ENCODE measurements at regions of chr6 and their contacts with region 1.

Region 1: DNA sequence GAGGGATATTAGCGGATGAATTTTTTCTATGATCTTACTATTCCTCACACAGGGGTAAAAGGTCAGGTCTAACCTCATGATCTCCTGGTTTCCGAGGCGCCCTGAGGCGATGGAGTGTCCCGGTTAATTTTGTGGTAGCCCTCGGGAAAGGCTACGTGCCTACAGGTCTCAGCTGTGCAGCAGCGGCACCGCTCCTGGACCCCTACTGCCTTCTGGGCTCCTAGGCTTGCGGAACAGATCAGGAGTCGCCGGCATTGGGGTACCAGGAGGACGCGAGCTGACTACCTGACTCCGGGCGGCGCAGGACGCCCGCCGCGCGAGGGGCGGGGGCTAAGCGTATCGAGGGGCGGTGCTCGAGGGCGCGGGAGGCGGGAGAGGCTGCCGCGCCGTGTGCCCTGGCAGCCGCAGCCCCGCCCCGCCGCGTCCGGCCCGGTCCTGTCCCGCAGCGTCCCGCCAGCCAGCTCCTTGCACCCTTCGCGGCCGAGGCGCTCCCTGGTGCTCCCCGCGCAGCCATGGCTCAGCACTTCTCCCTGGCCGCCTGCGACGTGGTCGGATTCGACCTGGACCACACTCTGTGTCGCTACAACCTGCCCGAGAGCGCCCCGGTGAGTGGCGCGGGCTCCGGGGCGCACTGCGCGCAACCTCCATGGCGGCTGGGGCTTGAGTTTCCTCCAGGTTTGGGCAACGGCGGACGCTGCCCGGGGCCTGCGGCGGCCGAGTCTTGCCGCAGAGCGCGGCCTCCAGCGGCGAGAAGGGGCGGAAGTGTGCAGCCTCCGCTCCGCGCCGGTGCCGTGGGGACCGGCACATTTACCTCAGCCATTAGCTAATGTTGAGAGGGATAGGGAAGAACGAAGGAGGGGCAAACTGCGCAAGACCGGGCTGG is at the start of gene NT5DC1:
- DNase-seq: peak; percentile 78 to 81
- ATAC-seq: peak; percentile 94 to 98
- H3K4me3 ChIP-seq: peak within 1 kb of the TSS; percentile 87
- H3K27ac ChIP-seq: peak within 1 kb of the TSS; percentile 98 to 99
- H3K4me1 ChIP-seq: peaks cover 31% of the 10 kb centered on the region
- CTCF ChIP-seq: no peak; the same call in 1 of the 3 replicates
- EP300 ChIP-seq: no peak
- POLR2A ChIP-seq: peak; percentile 76
- RAD21 ChIP-seq: peak in 1 of 2 experiments; percentile 33; a peak in 2 of 5 replicates
- polyA plus RNA-seq, gene NT5DC1: 27.2 and 31.5 TPM in 2 replicates

Region 2: DNA sequence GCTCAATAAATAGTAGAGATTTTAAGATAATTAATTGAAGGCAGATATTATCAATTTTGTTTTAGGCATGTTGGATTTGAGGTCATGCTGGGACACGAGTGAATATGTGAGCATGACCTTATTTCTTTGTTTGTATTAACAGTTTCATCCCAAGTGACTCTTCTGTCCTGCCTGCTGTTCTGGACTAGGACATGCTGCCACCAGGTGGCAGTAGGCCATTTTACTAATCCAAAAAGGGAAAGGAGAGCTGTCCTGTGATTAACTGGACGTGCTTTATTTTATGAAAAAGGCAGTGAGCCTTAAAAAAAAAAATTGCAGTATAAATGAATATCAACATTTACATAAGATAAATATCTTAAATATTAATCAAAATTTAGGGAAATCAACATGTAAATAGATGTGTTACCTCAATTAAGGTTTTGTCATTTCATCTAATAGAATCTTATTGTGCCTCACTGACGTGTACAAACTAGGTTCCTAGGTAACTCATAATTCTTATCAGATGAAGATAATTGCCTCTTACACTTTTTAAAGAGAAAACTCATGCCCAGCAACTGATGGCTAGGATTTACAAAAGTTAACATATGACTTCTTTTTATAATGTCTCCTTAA is 89.8 kb before region 1 on chr6:
- CTCF ChIA-PET with region 1: interaction called, 19 read pairs
- POLR2A ChIA-PET with region 1: interaction called, 6 read pairs
- DNase-seq: peak in 1 of 2 experiments; percentile 69
- ATAC-seq: peak; percentile 80 to 82; a peak in 5 of 6 replicates
- H3K4me3 ChIP-seq: no peak overlapping the region
- H3K27ac ChIP-seq: peak overlapping the region; percentile 21 to 66; a peak in 1 of 6 replicates
- H3K4me1 ChIP-seq: peaks cover 77% of the 10 kb centered on the region
- CTCF ChIP-seq: peak; percentile 80
- EP300 ChIP-seq: no peak
- POLR2A ChIP-seq: no peak
- RAD21 ChIP-seq: peak; percentile 81 to 89

Region 3: GRCh38 chr6:116060572-116061283 is 39.9 kb before region 1 on chr6 and contains the start of gene FRK:
- CTCF ChIA-PET with region 1: interaction called, 7 read pairs
- POLR2A ChIA-PET with region 1: interaction called, 17 read pairs
- DNase-seq: peak; percentile 32 to 87
- ATAC-seq: peak; percentile 91 to 95
- H3K4me3 ChIP-seq: peak within 1 kb of the TSS; percentile 72
- H3K27ac ChIP-seq: peak within 1 kb of the TSS; percentile 84 to 92
- H3K4me1 ChIP-seq: peaks cover 20% of the 10 kb centered on the region
- CTCF ChIP-seq: peak; percentile 29; the same call in 2 of the 3 replicates
- EP300 ChIP-seq: no peak
- POLR2A ChIP-seq: peak; percentile 35; the same call in 1 of the 2 replicates
- RAD21 ChIP-seq: 0 out of 5 replicates have a peak, but pooled peaks of 1 of the 2 experiments have one; percentile 15
- polyA plus RNA-seq, gene FRK: 6.7 and 8.9 TPM in 2 replicates

Region 4: DNA sequence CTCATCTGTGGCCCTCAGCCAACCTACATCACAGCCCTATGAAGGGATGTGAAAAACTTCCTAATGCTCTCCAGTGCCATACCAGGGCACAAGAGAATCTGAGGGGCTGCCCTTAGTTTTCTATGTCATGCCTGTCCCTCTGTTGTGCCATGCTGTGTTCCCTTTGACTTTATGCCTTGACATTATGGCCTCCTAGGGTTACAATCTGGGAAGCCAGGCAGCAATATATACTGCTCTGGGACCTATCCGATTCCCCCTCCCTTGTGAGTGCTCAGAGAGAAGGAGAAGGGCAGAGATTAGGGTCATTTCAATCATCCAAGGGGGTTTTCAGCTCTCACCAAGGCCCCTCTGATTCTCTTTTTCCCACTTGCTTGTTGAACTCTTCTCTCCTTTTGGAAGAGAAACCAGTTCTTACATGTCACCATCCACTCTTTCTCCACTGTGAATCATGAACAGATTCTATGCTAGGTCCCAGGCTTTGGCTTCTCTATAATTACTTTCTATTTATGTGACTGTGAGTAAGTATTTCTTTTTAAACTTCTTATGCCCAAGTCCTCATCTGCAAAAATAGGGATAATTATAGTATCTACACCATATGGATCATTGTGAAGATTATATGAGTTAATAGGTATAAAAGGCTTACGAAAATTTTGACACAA is 25.8 kb before region 1 on chr6:
- CTCF ChIA-PET with region 1: interaction called, 15 read pairs
- POLR2A ChIA-PET with region 1: interaction called, 5 read pairs
- DNase-seq: no peak
- ATAC-seq: no peak
- H3K4me3 ChIP-seq: no peak overlapping the region
- H3K27ac ChIP-seq: peak overlapping the region; percentile 38 to 49; a peak in 5 of 6 replicates
- H3K4me1 ChIP-seq: peaks cover 45% of the 10 kb centered on the region
- CTCF ChIP-seq: no peak
- EP300 ChIP-seq: no peak
- POLR2A ChIP-seq: no peak
- RAD21 ChIP-seq: no peak

Region 5: DNA sequence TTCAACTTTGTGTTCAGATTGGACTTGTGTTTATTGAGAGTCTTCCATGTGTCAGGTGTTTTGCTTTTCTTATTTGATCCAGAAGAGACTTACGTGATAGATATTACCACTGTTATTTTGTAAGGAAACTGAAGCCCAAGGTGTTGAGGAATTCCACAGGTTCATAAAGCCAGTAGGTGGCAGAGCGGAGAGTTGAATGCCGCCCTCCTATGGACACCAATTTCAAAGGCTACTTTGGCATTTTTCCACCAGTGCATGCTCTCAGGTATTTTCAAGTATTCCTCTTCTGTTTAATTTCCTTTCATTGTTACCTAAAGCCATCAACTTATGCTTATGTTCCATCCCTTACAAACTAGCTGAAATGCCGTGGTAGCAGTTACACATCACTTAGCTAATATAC is 39.3 kb after region 1 on chr6:
- CTCF ChIA-PET with region 1: no interaction called
- POLR2A ChIA-PET with region 1: no interaction called
- DNase-seq: peak in 1 of 2 experiments; percentile 9
- ATAC-seq: peak in 1 of 2 experiments; percentile 43; a peak in 1 of 6 replicates
- H3K4me3 ChIP-seq: no peak overlapping the region
- H3K27ac ChIP-seq: no peak overlapping the region
- H3K4me1 ChIP-seq: no peaks in the 10 kb centered on the region
- CTCF ChIP-seq: peak; percentile 15; the same call in 1 of the 3 replicates
- EP300 ChIP-seq: no peak
- POLR2A ChIP-seq: no peak
- RAD21 ChIP-seq: no peak